Activated CD4-positive, alpha-beta T cell treated with anti-CD3 and anti-CD28 coated beads for 36 hours (primary cell): ENCODE measurements at regions of chr1 and their contacts with region 1.

Region 1: GRCh38 chr1:200139661-200140250 is 112.2 kb downstream of the NR5A2 start:
- DNase-seq: peak; percentile 39
- ATAC-seq: peak; percentile 88
- H3K4me3 Mint-ChIP-seq: no peak overlapping the region
- H3K27ac Mint-ChIP-seq: no peak overlapping the region
- H3K4me1 Mint-ChIP-seq: no peaks in the 10 kb centered on the region
- H3K27me3 Mint-ChIP-seq: no peaks in the 10 kb centered on the region

Region 2: GRCh38 chr1:199684686-199685273 is 455.0 kb before region 1 on chr1:
- CTCF ChIA-PET with region 1: no interaction called
- POLR2A ChIA-PET with region 1: no interaction called
- intact Hi-C with region 1: loop called in 1 of 2 experiments (anchors 5 kb)
- DNase-seq: peak; percentile 29
- ATAC-seq: peak; percentile 39
- H3K4me3 Mint-ChIP-seq: no peak overlapping the region
- H3K27ac Mint-ChIP-seq: no peak overlapping the region
- H3K4me1 Mint-ChIP-seq: no peaks in the 10 kb centered on the region
- H3K27me3 Mint-ChIP-seq: peaks cover 8% of the 10 kb centered on the region

Region 3: DNA sequence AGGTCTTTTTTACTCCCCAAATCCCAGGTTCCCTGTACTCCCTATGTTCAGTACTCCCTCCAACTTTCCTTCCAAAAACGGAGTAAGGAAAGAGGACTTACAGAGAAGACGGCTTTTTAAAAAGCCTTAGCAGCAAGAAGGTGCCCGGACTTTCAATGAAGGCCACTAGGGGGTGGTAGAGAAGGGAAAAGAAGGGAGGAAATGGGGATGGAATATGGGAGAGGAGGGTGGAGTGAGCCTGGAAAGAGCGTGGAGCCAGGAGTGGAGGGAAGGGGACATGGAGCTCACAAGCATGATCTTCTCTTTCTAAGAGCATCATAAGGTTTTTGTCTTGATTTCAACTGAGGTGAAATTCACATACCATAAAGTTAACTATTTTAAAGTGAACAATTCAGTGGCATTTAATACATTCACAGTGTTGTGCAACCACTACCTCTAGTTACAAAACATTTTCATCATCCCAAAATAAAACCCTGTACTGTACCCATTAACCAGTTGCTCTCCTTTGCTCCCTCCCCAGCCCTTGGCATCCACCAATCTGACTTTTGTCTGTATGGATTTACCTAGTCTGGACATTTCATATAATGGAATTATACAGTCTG is 140.2 kb after region 1 on chr1:
- CTCF ChIA-PET with region 1: interaction called, 5 read pairs
- POLR2A ChIA-PET with region 1: no interaction called
- intact Hi-C with region 1: loop called (anchors 2 to 10 kb)
- DNase-seq: peak; percentile 51
- ATAC-seq: no peak
- H3K4me3 Mint-ChIP-seq: no peak overlapping the region
- H3K27ac Mint-ChIP-seq: no peak overlapping the region
- H3K4me1 Mint-ChIP-seq: no peaks in the 10 kb centered on the region
- H3K27me3 Mint-ChIP-seq: no peaks in the 10 kb centered on the region

Region 4: DNA sequence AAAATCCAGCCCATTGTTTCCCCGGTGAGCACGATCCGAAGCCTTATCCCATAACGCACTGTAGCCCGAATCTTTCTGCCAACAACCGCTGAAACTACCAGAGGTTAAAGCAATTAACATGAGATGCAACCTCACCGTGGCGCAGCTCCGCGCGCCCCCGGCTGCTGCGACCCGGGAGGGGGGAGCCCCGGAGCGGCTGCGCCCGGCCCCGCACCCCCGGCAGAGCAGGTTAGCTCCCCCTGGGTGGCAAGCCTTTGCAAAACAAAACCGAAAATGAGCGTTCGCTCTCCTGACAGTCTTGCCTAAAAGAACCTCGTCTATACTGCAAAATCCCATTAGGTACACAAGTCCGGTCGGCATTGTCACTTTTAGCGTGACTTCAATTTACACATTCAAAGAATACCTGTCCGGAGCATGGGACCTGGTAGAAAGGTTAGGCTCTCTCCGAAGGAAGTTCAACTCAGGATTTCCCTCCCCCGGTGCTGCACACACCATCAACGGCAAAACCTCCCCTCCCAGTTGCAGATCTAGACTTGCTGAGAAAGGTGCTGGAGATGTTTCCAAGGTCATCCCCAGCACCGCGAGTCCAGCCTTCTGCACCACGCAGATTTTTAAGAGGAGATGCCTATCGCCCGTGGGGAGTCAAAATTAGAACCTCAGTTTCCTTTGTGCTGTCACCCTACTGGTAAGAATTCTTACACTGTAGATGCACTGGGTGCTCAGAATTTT is 162.6 kb after region 1 on chr1:
- CTCF ChIA-PET with region 1: interaction called, 7 read pairs
- POLR2A ChIA-PET with region 1: no interaction called
- intact Hi-C with region 1: loop called in 1 of 2 experiments (anchors 2 kb)
- DNase-seq: peak; percentile 77
- ATAC-seq: peak; percentile 93
- H3K4me3 Mint-ChIP-seq: peak overlapping the region; percentile 73
- H3K27ac Mint-ChIP-seq: no peak overlapping the region
- H3K4me1 Mint-ChIP-seq: peaks cover 12% of the 10 kb centered on the region
- H3K27me3 Mint-ChIP-seq: no peaks in the 10 kb centered on the region